ENCODE measurements at regions of chr2 and their contacts with region 1.

Region 1: GRCh38 chr2:9770308-9771100 is 72.8 kb upstream of the TAF1B start:
- DNase-seq: peak; percentile 82 to 91
- ATAC-seq: peak; percentile 67 to 85
- H3K4me3 ChIP-seq: no peak overlapping the region
- H3K27ac ChIP-seq: peak overlapping the region; percentile 54 to 79; a peak in 5 of 6 replicates
- H3K4me1 ChIP-seq: peaks cover 25% of the 10 kb centered on the region
- CTCF ChIP-seq: peak; percentile 82
- EP300 ChIP-seq: no peak
- POLR2A ChIP-seq: no peak
- RAD21 ChIP-seq: peak; percentile 72 to 75

Region 2: DNA sequence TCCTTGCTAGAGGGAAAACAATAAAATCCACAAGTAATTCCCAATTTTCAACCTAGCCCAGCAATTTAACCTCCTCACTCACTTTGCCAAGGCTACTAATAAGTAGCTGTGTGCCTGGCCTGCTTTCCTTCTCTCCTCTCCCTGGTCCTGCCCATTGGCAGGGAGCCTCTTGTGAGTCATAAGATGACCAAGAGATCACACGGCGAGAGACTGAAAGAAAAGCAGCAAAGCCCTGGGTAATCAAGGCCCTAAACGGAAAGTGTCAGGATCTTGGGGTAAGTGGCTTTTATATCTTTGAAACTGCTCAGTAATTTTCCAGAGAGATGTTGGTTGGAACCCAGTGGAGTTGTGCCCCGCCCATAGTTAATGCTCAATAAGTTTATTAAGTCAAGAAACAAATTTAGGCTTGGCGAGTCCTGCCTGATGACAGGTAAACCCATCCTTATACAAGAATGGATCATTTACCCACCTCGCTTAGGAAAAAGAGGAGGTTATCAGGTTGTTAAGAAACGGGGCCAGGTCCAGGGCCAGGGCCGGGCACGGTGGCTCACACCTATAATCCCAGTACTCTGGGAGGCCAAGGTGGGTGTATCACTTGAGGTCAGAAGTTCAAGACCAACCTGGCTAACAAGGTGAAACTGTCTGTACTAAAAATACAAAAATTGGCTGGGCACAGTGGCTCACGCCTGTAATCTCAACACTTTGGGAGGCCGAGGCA is 204.9 kb before region 1 on chr2:
- CTCF ChIA-PET with region 1: interaction called, 11 read pairs
- POLR2A ChIA-PET with region 1: no interaction called
- DNase-seq: peak; percentile 80 to 85
- ATAC-seq: peak; percentile 95 to 99
- H3K4me3 ChIP-seq: peak overlapping the region; percentile 19; the same call in 2 of the 3 replicates
- H3K27ac ChIP-seq: peak overlapping the region; percentile 79 to 89
- H3K4me1 ChIP-seq: peaks cover 22% of the 10 kb centered on the region
- CTCF ChIP-seq: no peak
- EP300 ChIP-seq: no peak
- POLR2A ChIP-seq: no peak
- RAD21 ChIP-seq: 0 out of 5 replicates have a peak, but pooled peaks of 1 of the 2 experiments have one; percentile 22

Region 3: GRCh38 chr2:9648821-9649220 is 121.7 kb before region 1 on chr2:
- CTCF ChIA-PET with region 1: interaction called, 16 read pairs
- POLR2A ChIA-PET with region 1: no interaction called
- DNase-seq: no peak
- ATAC-seq: no peak
- H3K4me3 ChIP-seq: no peak overlapping the region
- H3K27ac ChIP-seq: no peak overlapping the region; a peak in 1 of 6 replicates
- H3K4me1 ChIP-seq: peaks cover 7% of the 10 kb centered on the region; the same call in 1 of the 3 replicates
- CTCF ChIP-seq: no peak
- EP300 ChIP-seq: no peak
- POLR2A ChIP-seq: no peak
- RAD21 ChIP-seq: no peak

Region 4: GRCh38 chr2:9703085-9703641 is 67.3 kb before region 1 on chr2:
- CTCF ChIA-PET with region 1: interaction called, 27 read pairs
- POLR2A ChIA-PET with region 1: no interaction called
- DNase-seq: peak; percentile 90 to 97
- ATAC-seq: peak; percentile 87 to 88
- H3K4me3 ChIP-seq: peak overlapping the region; percentile 17; the same call in 1 of the 3 replicates
- H3K27ac ChIP-seq: peak overlapping the region; percentile 91 to 95
- H3K4me1 ChIP-seq: peaks cover 48% of the 10 kb centered on the region
- CTCF ChIP-seq: peak; percentile 17; the same call in 1 of the 3 replicates
- EP300 ChIP-seq: peak in 1 of 2 experiments; percentile 4; a peak in 1 of 5 replicates
- POLR2A ChIP-seq: no peak
- RAD21 ChIP-seq: peak; percentile 47 to 51; a peak in 4 of 5 replicates

Region 5: DNA sequence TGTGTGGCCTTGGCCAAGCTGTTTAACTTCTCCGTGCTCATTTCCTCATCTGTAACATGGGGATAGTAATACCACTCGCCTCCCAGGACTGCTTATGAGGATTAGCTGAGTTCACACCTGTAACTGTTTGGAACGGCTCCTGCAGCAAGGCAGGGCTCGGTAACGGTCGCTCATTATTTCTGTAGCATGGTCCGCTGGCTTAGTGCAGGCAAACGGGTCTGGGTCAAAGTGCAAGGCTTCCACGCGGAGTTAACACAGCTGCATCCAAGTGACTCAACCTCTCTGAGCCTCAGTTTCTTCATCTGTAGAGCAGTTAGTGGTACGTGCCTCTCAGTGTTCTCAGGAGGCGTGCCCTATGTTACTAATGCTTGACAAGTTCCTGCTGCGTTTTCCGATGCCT is 45.4 kb before region 1 on chr2:
- CTCF ChIA-PET with region 1: interaction called, 11 read pairs
- POLR2A ChIA-PET with region 1: no interaction called
- DNase-seq: no peak
- ATAC-seq: no peak
- H3K4me3 ChIP-seq: no peak overlapping the region
- H3K27ac ChIP-seq: no peak overlapping the region
- H3K4me1 ChIP-seq: no peaks in the 10 kb centered on the region
- CTCF ChIP-seq: no peak
- EP300 ChIP-seq: no peak
- POLR2A ChIP-seq: no peak
- RAD21 ChIP-seq: no peak

Region 6: DNA sequence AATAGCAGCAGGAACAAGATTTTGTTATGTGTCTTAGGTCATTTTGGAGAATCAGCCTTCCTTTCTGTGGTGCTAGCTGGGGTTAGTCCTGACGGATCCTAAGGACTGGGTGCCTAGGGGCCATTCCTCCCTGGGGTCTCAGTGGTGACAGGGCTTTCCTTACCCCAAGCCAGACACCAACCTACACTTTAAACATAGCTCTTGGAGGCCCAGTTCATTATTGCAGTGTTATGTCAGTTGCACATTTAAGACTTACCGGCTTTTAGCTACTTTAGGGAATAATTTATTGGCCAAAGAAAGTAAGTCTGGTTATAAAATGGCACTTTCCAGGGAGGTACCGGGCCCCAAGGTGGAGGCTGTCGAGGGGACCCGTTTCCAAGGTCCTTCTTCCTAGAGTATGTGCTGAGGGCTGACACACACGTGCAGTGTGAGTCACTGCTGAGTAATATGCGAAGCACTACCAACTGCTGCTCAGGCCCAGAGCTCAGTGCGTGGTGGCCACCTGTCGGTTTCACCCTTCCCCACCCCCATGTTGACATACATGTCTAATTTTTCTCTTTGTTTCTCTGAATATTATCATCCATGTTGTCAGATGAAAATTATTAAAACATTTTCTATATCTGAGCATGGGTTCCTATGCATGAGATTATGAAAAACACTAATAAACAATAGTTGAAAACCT is 144.0 kb after region 1 on chr2:
- CTCF ChIA-PET with region 1: interaction called, 11 read pairs
- POLR2A ChIA-PET with region 1: no interaction called
- DNase-seq: peak; percentile 60 to 77
- ATAC-seq: peak; percentile 99 to 100
- H3K4me3 ChIP-seq: no peak overlapping the region
- H3K27ac ChIP-seq: peak overlapping the region; percentile 34 to 58; a peak in 5 of 6 replicates
- H3K4me1 ChIP-seq: peaks cover 12% of the 10 kb centered on the region
- CTCF ChIP-seq: peak; percentile 59
- EP300 ChIP-seq: no peak
- POLR2A ChIP-seq: no peak
- RAD21 ChIP-seq: peak; percentile 68 to 74

Region 7: GRCh38 chr2:10103179-10103732 is 332.8 kb after region 1 on chr2:
- CTCF ChIA-PET with region 1: no interaction called
- POLR2A ChIA-PET with region 1: no interaction called
- DNase-seq: no peak
- ATAC-seq: no peak
- H3K4me3 ChIP-seq: no peak overlapping the region
- H3K27ac ChIP-seq: no peak overlapping the region
- H3K4me1 ChIP-seq: peaks cover 7% of the 10 kb centered on the region; the same call in 1 of the 3 replicates
- CTCF ChIP-seq: no peak
- EP300 ChIP-seq: no peak
- POLR2A ChIP-seq: no peak
- RAD21 ChIP-seq: no peak

Measured in A549 (cell line).